ENCODE measurements at regions of chr10 and their contacts with region 1.

Region 1: DNA sequence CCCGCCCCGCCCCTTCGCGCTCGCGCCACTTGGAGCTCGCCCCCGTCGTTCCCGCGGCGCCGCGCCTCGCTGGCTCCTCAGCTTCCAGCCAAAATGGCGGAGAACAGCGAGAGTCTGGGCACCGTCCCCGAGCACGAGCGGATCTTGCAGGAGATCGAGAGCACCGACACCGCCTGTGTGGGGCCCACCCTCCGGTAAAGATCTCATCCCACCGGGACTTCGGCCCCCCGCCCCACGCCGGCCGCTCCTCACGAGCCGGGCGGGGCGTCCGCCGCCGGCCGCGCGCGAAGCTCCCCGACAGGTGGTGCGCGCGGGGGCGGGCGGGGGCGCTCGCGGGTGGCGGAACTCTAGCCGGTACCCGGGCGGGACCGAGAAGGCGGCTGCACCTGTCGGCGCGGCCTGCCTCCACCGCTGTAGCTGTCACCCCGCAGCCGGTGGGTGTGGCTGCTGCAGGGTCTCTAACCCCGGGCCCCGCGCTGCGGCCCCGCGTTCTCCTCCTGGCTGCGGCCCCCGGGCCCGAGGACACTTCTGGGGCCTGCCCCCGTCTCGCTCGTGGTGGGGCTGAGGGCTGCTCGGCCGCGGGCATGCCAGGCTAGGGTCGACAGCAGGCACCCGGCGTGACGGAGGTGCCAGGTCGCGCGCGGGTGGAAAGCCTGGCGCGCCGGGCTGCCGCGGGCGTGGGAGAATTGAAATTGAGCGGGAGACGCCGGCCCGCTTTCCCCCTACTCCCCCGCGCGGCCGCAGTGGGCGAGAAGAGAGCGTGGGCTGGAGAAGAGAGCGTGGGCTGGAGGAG is at the start of gene EXOC6:
- DNase-seq: peak; percentile 63
- ATAC-seq: peak; percentile 87
- H3K4me3 ChIP-seq: peak within 1 kb of the TSS; percentile 94 to 96 (median 95)
- H3K27ac ChIP-seq: peak within 1 kb of the TSS; percentile 81
- H3K4me1 ChIP-seq: peaks cover 37% of the 10 kb centered on the region
- H3K27me3 ChIP-seq: no peaks in the 10 kb centered on the region; a peak in 1 of 5 replicates
- CTCF ChIP-seq: peak; percentile 36; the same call in 1 of the 2 replicates
- EP300 ChIP-seq: no peak
- POLR2A ChIP-seq: peak; percentile 78 to 82
- RAD21 ChIP-seq: peak; percentile 48; the same call in 1 of the 2 replicates
- total RNA-seq, gene EXOC6: 22.2 and 48.7 TPM in 2 replicates

Region 2: DNA sequence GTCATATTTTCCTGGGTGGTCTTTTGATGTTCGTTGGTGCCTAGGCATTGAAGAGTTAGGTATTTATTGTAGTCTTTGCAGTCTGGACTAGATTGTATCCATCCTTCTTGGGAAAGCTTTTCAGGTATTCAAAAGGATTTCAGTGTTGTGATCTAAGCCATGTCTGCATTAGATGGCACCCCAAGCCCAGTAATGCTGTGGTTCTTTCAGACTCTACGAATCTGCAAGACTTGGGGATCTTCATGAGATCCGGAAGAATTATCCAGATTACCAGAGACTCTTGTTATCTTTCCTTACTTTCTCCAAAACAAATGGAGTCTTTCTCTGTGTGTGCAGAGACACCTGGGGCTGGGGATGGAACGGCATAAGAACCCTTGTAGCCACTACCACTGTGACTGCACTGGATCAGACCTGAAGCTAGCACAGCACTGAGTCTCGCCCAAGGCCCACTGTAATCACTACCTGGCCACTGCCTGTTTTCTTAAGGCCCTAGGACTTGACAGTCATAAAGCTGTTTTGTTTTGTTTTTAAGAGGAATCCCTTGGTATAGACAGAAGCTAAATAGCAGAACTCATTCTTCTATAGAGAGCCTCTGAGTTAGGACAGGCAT is 482.1 kb before region 1 on chr10:
- CTCF ChIA-PET with region 1: no interaction called
- POLR2A ChIA-PET with region 1: no interaction called
- in situ Hi-C with region 1: no loop called
- intact Hi-C with region 1: no loop called
- DNase-seq: no peak
- ATAC-seq: peak; percentile 35; the same call in 1 of the 3 replicates
- H3K4me3 ChIP-seq: no peak overlapping the region
- H3K27ac ChIP-seq: no peak overlapping the region
- H3K4me1 ChIP-seq: no peaks in the 10 kb centered on the region
- H3K27me3 ChIP-seq: no peaks in the 10 kb centered on the region
- CTCF ChIP-seq: peak; percentile 21
- EP300 ChIP-seq: no peak
- POLR2A ChIP-seq: no peak
- RAD21 ChIP-seq: no peak

Region 3: GRCh38 chr10:92592761-92593618 is 255.6 kb before region 1 on chr10 and contains the start of gene KIF11:
- CTCF ChIA-PET with region 1: no interaction called
- POLR2A ChIA-PET with region 1: no interaction called
- in situ Hi-C with region 1: no loop called
- intact Hi-C with region 1: loop called (anchors 5 kb)
- DNase-seq: peak; percentile 95
- ATAC-seq: peak; percentile 88
- H3K4me3 ChIP-seq: peak within 1 kb of the TSS; percentile 81 to 91 (median 88)
- H3K27ac ChIP-seq: peak within 1 kb of the TSS; percentile 88
- H3K4me1 ChIP-seq: peaks cover 37% of the 10 kb centered on the region
- H3K27me3 ChIP-seq: no peaks in the 10 kb centered on the region; a peak in 1 of 5 replicates
- CTCF ChIP-seq: peak; percentile 25; the same call in 1 of the 2 replicates
- EP300 ChIP-seq: 0 out of 4 replicates have a peak, but pooled peaks have one; percentile 18 to 35
- POLR2A ChIP-seq: peak; percentile 96 to 97
- RAD21 ChIP-seq: no peak
- total RNA-seq, gene KIF11: 38.4 and 62.8 TPM in 2 replicates

Region 4: DNA sequence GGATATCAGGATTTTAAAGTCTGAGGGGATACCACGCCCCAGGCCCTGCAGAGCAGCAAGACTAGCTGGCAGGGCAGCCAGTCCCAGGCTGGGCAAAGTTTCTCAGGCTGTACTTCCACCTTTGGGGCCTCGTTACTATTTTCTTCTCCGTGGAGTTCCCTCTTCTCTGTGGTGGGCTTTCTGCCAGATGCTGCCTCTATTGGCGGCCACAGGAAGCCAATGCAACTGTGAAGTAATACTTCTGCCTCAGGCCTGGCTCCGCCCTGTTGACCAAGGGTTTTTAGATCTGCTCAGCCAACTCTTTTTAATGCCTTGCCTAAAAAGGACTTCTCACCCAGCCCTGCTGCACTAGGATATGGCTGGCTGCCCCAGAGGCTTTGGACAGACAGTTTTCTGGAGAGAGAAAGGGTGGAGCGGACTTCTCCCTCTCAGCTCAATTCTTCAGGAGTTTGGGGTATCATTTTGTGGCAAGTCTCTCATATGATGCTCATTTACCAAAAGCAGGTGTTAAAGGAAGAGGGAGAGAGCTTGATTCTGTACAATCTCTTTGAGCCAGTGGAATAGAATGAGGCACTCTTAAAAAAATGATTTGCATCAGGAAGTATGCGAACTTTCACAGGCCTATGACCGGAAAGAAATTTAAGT is 91.4 kb before region 1 on chr10:
- CTCF ChIA-PET with region 1: no interaction called
- POLR2A ChIA-PET with region 1: interaction called, 3 read pairs
- in situ Hi-C with region 1: no loop called
- intact Hi-C with region 1: loop called (anchors 1 kb)
- DNase-seq: peak; percentile 72
- ATAC-seq: peak; percentile 87
- H3K4me3 ChIP-seq: peak overlapping the region; percentile 17 to 60 (median 37); a peak in 5 of 6 replicates
- H3K27ac ChIP-seq: peak overlapping the region; percentile 41
- H3K4me1 ChIP-seq: peaks cover 64% of the 10 kb centered on the region
- H3K27me3 ChIP-seq: 0 out of 5 replicates have a peak, but pooled peaks cover 0 to 2% of the 10 kb centered on the region in 2 experiments
- CTCF ChIP-seq: peak; percentile 51
- EP300 ChIP-seq: no peak
- POLR2A ChIP-seq: no peak
- RAD21 ChIP-seq: 0 out of 2 replicates have a peak, but pooled peaks have one; percentile 29

Region 5: GRCh38 chr10:92891885-92892704 is 43.5 kb after region 1 on chr10:
- CTCF ChIA-PET with region 1: no interaction called
- POLR2A ChIA-PET with region 1: interaction called, 4 read pairs
- in situ Hi-C with region 1: no loop called
- intact Hi-C with region 1: loop called (anchors 1 kb)
- DNase-seq: peak; percentile 96
- ATAC-seq: peak; percentile 98
- H3K4me3 ChIP-seq: peak overlapping the region in 1 of 3 experiments; percentile 28; a peak in 1 of 6 replicates
- H3K27ac ChIP-seq: peak overlapping the region; percentile 68
- H3K4me1 ChIP-seq: peaks cover 32% of the 10 kb centered on the region
- H3K27me3 ChIP-seq: no peaks in the 10 kb centered on the region
- CTCF ChIP-seq: no peak
- EP300 ChIP-seq: peak in 1 of 2 experiments; percentile 72; a peak in 2 of 4 replicates
- POLR2A ChIP-seq: no peak
- RAD21 ChIP-seq: no peak

Region 6: DNA sequence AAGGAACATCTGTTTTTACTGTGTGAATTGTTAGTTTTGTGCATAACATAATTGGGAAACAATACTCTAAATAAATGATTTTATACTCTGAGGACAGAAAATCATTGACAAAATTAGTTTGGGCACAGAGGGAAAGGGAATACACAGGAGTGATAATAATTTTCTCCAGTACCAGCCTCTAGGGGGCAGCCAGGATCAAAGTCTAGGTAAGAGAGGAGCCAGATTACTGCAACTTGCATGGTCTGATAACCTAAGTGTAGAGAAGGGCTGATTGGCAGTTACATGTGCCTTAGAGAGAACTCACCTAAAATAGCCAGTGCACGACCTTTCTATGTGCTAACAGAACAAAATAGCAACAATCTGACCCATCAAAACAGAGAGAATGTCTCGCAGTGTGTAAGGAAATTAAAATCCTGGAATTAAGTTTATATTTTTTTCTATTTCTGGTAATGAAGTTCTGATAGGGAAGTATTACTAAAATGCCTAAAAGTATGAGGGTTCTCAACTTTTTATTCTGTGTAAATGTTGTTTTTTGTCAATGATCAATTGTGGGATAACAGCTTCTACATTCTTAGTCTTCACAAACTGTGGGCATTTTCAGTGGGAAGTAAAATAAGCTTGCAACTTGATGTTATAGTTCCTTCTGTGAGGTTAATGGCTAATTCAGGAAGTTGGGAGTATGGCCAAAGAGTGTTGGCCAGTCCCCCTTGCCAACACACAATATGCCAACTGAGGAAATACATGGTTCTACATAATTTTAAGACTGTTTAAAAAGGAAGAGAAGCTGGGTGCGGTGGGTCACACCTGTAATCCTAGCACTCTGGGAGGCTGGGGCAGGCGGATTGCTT is 66.1 kb after region 1 on chr10:
- CTCF ChIA-PET with region 1: no interaction called
- POLR2A ChIA-PET with region 1: no interaction called
- in situ Hi-C with region 1: no loop called
- intact Hi-C with region 1: no loop called
- DNase-seq: peak; percentile 68
- ATAC-seq: peak; percentile 96
- H3K4me3 ChIP-seq: no peak overlapping the region
- H3K27ac ChIP-seq: no peak overlapping the region
- H3K4me1 ChIP-seq: no peaks in the 10 kb centered on the region
- H3K27me3 ChIP-seq: no peaks in the 10 kb centered on the region
- CTCF ChIP-seq: peak; percentile 69
- EP300 ChIP-seq: no peak
- POLR2A ChIP-seq: no peak
- RAD21 ChIP-seq: no peak

Measured in HepG2 (cell line).